ENCODE measurements at regions of chr1 and their contacts with region 1.

Region 1: GRCh38 chr1:205711104-205712020 is 31.1 kb upstream of the SLC45A3 start:
- DNase-seq: peak; percentile 80
- ATAC-seq: peak; percentile 90
- H3K4me3 Mint-ChIP-seq: no peak overlapping the region
- H3K27ac Mint-ChIP-seq: peak overlapping the region; percentile 31
- H3K4me1 Mint-ChIP-seq: peaks cover 12% of the 10 kb centered on the region
- H3K27me3 Mint-ChIP-seq: no peaks in the 10 kb centered on the region

Region 2: GRCh38 chr1:205631727-205632373 is 79.5 kb before region 1 on chr1 and contains the start of gene ELK4:
- CTCF ChIA-PET with region 1: interaction called, 11 read pairs
- POLR2A ChIA-PET with region 1: interaction called, 3 read pairs
- DNase-seq: peak; percentile 99
- ATAC-seq: peak; percentile 83
- H3K4me3 Mint-ChIP-seq: peak within 1 kb of the TSS; percentile 90
- H3K27ac Mint-ChIP-seq: peak within 1 kb of the TSS; percentile 98
- H3K4me1 Mint-ChIP-seq: peaks cover 42% of the 10 kb centered on the region
- H3K27me3 Mint-ChIP-seq: peaks cover 4% of the 10 kb centered on the region
- total RNA-seq, gene ELK4: 95.2 to 97.5 TPM

Region 3: DNA sequence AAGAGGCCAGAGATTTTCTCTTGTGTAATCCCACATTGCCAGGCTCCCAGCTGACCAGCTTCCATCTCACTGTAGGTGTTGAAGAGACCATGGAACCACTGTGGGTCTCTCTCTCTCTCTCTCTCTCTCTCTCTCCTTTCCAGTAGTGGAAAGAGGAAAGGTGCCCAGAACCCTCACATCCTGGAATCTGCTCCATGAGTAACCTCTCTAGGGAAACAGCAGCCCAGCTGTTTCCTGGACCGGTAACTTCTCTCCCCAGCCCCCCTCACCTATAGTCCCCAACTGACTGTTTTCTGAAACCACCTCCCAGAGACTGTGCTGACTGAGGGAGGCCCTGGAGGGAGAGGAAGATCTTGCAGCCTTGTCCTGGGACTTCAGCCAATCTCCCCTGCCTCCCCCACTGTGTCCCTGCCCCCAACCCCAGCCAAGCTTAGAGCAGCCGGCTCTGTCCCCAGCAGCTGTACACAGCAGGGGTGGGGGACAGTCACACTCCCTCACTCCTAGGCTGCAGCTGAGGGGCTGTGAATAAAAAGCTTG is 10.4 kb before region 1 on chr1:
- CTCF ChIA-PET with region 1: interaction called, 22 read pairs
- POLR2A ChIA-PET with region 1: interaction called, 4 read pairs
- DNase-seq: no peak
- ATAC-seq: no peak
- H3K4me3 Mint-ChIP-seq: no peak overlapping the region
- H3K27ac Mint-ChIP-seq: no peak overlapping the region
- H3K4me1 Mint-ChIP-seq: peaks cover 8% of the 10 kb centered on the region
- H3K27me3 Mint-ChIP-seq: no peaks in the 10 kb centered on the region

Region 4: DNA sequence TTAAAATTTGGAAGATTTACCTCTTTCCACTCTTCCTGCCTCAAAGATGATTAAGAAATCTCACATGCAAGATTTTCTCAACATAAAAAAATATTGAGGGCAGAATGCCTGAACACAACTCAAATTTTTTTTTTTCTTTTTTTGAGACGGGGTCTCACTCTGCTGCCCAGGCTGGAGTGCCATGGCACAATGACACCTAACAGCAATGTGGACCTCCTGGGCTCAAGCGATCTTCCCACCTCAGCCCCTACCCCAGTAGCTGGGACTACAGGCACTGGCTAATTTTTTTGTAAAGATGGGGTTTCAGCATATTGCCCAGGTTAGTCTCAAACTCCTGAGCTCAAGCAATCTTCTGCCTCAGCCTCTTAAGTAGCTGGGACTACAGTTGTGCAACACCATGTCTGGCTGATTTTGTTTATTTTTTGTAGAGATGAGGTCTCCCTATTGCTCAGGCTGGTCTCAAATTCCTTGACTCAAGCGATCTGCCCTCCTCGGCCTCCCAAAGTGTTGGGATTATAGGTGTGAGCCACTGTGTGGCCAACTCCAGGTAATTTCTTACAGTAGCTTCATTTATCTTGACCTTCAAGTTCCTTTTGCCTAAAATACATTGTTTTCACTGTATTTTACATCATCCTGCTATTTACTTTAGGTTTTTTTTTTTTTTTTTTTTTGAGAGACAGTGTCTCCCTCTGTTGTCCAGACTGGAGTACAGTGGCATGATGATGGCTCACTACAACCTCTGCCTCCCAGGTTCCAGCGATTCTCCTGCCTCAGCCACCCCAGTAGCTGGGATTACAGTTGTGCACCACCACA is 28.2 kb after region 1 on chr1:
- CTCF ChIA-PET with region 1: interaction called, 35 read pairs
- POLR2A ChIA-PET with region 1: no interaction called
- DNase-seq: no peak
- ATAC-seq: no peak
- H3K4me3 Mint-ChIP-seq: no peak overlapping the region
- H3K27ac Mint-ChIP-seq: peak overlapping the region; percentile 28
- H3K4me1 Mint-ChIP-seq: peaks cover 34% of the 10 kb centered on the region
- H3K27me3 Mint-ChIP-seq: no peaks in the 10 kb centered on the region

Region 5: DNA sequence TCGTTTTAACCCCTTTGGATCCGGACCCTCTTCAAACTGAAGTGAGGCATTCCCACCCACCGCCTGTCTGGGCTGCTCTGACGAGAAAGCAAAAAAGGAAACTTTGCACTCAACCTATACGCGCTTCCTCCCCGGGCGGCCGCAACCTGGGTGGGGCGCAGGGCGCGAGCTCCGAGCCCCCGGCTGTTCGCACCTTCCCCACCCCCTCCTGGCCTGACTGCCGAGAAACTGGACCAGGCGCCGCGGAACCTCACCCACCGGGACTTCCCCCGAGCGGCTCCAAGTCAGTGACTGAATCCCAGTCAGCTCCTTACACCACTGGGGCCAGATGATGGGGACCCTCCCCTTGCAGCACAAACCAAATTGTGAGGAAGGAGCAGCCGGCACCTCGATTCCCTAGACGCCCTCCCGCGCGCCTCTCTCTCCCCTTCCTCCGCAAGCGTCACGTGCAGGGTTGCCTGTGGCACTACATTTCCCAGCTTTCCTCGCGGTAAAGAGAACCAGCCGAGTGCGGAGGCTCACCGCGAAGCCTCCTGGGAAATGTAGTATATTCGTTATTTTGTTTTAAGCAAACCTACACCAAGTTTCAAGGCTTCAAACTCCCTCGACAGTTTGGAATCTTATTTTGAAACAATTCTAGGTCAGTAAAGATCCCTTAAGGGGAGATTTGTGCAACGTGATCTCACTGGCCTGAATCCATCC is 63.8 kb after region 1 on chr1 and contains the start of gene RAB29:
- CTCF ChIA-PET with region 1: interaction called, 17 read pairs
- POLR2A ChIA-PET with region 1: interaction called, 3 read pairs
- DNase-seq: peak; percentile 92
- ATAC-seq: peak; percentile 88
- H3K4me3 Mint-ChIP-seq: peak within 1 kb of the TSS; percentile 97
- H3K27ac Mint-ChIP-seq: peak within 1 kb of the TSS; percentile 92
- H3K4me1 Mint-ChIP-seq: peaks cover 56% of the 10 kb centered on the region
- H3K27me3 Mint-ChIP-seq: no peaks in the 10 kb centered on the region
- total RNA-seq, gene RAB29: 42.5 to 42.7 TPM